ENCODE measurements at regions of chr6 and their contacts with region 1.

Region 1: GRCh38 chr6:137799950-137800568 is 67.0 kb upstream of the TNFAIP3 start:
- DNase-seq: peak in 1 of 2 experiments; percentile 14
- H3K4me3 ChIP-seq: no peak overlapping the region
- H3K27ac ChIP-seq: no peak overlapping the region
- H3K4me1 ChIP-seq: no peaks in the 10 kb centered on the region
- H3K27me3 ChIP-seq: no peaks in the 10 kb centered on the region
- CTCF ChIP-seq: peak; percentile 83

Region 2: DNA sequence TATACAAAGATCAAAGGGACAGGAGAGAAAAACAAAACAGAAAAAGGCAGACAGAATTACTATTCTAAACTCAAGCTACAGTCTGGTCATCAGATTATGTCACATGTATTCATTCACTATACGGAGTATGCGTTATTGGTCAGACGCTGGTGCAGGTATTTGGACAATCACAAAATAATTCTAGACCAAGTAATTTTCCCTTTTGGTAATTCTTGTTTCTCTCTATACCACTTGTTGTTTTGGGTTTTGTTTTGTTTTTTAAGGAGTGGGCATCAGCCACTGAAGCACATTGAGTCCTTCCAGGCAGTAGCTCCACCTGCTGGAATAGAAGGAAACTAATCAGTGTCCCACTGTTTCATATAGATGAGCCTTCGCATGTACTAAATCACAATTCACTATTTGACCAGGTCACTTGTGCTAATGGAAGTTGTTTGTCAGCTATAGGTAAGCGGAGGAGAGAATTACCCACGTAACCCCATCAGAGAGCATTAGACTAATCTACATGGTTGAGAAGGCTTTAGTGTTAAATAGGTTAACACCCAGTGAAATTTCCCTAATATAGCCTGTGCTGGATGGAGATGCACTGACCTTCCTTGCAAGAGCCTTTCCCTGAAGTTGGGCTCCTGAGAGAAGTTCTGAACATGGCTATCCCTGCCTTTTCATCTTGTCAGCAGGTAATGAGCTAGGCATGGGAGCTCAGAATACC is 144.9 kb after region 1 on chr6:
- CTCF ChIA-PET with region 1: interaction called, 5 read pairs
- POLR2A ChIA-PET with region 1: no interaction called
- intact Hi-C with region 1: loop called (anchors 1 kb)
- DNase-seq: no peak
- H3K4me3 ChIP-seq: no peak overlapping the region
- H3K27ac ChIP-seq: no peak overlapping the region
- H3K4me1 ChIP-seq: peaks cover 2% of the 10 kb centered on the region; the same call in 1 of the 2 replicates
- H3K27me3 ChIP-seq: no peaks in the 10 kb centered on the region
- CTCF ChIP-seq: peak; percentile 90